AG04450 (cell line): ENCODE measurements at regions of chr19 and their contacts with region 1.

Region 1: DNA sequence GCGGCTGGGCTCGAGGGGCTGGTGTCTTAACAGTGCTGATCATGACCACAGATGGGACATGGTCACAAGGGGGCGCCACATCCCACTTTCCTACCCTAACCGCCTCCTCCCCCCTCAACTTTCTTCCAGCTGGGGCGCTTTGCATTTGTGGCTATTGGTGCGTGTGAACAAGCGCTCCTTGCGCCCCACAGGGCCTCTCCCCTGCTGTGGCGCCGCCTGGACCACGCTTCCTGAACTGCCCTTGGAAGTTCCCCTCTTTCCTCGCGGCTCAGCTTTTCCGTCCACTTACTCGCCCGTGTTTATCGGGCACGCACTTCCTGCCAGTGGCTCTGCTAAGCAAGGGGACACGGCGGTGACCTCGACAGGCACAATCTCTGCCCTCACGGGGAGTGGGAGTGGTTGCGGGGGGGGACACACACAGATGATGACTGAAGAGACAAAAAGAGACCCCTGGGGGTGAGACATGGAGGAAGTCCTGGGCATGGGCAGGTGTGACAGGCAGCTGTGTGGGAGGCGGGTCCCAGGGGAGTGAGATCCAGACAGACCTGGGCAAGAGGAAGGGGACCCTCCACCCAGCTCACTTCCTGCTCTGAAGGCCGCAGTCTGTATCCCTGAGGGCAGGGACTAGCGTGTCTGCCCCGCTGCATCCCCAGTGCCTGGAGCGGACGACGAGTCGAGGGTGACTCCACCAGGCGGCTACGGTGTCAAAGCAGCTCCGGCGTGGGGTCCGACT is 40.3 kb downstream of the ZNF787 start:
- DNase-seq: peak; percentile 37
- H3K4me3 ChIP-seq: peak overlapping the region; percentile 49
- H3K27ac ChIP-seq: no peak overlapping the region
- H3K27me3 ChIP-seq: no peaks in the 10 kb centered on the region
- CTCF ChIP-seq: peak; percentile 68

Region 2: GRCh38 chr19:56140583-56141416 is 60.0 kb after region 1 on chr19 and contains the start of gene ZNF444:
- CTCF ChIA-PET with region 1: interaction called, 10 read pairs
- POLR2A ChIA-PET with region 1: interaction called, 3 read pairs
- DNase-seq: peak; percentile 99
- H3K4me3 ChIP-seq: peak within 1 kb of the TSS; percentile 75
- H3K27ac ChIP-seq: peak within 1 kb of the TSS; percentile 87
- H3K27me3 ChIP-seq: no peaks in the 10 kb centered on the region
- CTCF ChIP-seq: no peak
- polyA plus RNA-seq, gene ZNF444: 9.9 and 11.6 TPM in 2 replicates

Region 3: GRCh38 chr19:56170261-56170660 is 89.4 kb after region 1 on chr19:
- CTCF ChIA-PET with region 1: interaction called, 140 read pairs
- POLR2A ChIA-PET with region 1: no interaction called
- DNase-seq: no peak
- H3K4me3 ChIP-seq: no peak overlapping the region
- H3K27ac ChIP-seq: no peak overlapping the region
- H3K27me3 ChIP-seq: peaks cover 3% of the 10 kb centered on the region
- CTCF ChIP-seq: no peak